ENCODE measurements at regions of chrX and their contacts with region 1.

Region 1: GRCh38 chrX:39477762-39478120 is 620.0 kb downstream of the BCOR start:
- DNase-seq: peak; percentile 66 to 86 (median 73)
- ATAC-seq: peak; percentile 69 to 88 (median 78)
- H3K4me3 ChIP-seq: no peak overlapping the region
- H3K27ac ChIP-seq: peak overlapping the region in 8 of 12 donors; percentile 39 to 69 (median 54)
- H3K4me1 ChIP-seq: peaks cover 0 to 26% (median 8%) of the 10 kb centered on the region in 12 donors
- H3K27me3 ChIP-seq: peaks cover 0 to 17% (median 0%) of the 10 kb centered on the region in 9 donors
- CTCF ChIP-seq: no peak
- POLR2A ChIP-seq: no peak

Region 2: GRCh38 chrX:39519030-39519488 is 41.3 kb after region 1 on chrX:
- intact Hi-C with region 1: loop called in 4 of 10 experiments (anchors 2 to 5 kb)
- DNase-seq: peak in 4 of 5 donors; percentile 29 to 49 (median 39)
- ATAC-seq: peak; percentile 10 to 63 (median 36)
- H3K4me3 ChIP-seq: peak overlapping the region in 7 of 12 donors; percentile 5 to 42 (median 32)
- H3K27ac ChIP-seq: peak overlapping the region; percentile 40 to 90 (median 70)
- H3K4me1 ChIP-seq: peaks cover 0 to 14% (median 2%) of the 10 kb centered on the region in 12 donors
- H3K27me3 ChIP-seq: peaks cover 0 to 19% (median 0%) of the 10 kb centered on the region in 9 donors
- CTCF ChIP-seq: no peak
- POLR2A ChIP-seq: no peak

Region 3: GRCh38 chrX:39652336-39653131 is 174.8 kb after region 1 on chrX:
- intact Hi-C with region 1: no loop called
- DNase-seq: peak in 1 of 5 donors; percentile 22
- ATAC-seq: no peak
- H3K4me3 ChIP-seq: no peak overlapping the region
- H3K27ac ChIP-seq: no peak overlapping the region
- H3K4me1 ChIP-seq: no peaks in the 10 kb centered on the region
- H3K27me3 ChIP-seq: peaks cover 0 to 37% (median 0%) of the 10 kb centered on the region in 9 donors
- CTCF ChIP-seq: peak in 11 of 12 donors; percentile 23 to 56 (median 38)
- POLR2A ChIP-seq: no peak

Region 4: DNA sequence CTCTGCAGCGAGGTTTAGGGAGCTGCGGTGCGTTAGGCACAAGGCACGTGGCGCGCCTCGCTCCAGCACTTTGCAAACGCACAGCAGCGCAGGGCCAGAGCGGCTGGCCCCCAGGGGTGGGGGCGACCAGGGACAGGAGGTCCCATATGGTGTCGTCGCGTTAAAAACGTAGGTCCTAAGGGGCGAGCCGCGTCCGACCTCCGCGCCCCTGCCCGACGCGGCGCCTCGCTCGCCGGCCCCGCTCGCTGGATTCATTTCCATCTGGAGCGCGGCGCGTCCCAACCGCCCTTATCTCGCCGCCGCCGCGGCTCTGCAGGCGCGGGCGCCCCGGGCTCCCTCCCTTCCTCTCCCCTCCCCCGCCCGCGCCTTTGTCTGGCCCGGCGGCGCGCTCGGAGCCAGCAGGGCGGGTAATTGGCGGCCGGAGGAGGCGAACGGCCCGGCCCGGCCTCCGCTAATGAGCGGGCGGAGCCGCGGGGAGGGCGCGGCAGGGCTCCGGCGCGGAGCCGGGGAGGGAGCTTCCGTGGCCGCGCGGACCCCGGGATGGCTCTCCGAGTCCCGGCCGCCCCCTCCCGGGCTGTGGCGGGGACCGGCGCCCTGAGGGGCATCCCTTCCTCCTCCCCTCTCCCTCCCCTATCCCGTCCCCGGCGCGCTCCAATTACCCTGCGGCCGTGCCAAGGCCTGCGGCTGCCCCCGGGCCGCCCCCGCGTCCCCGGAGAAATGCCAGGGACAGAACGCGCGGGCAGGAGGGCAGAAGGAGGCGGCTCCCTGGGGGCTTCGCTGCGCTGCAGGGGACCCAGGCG is 211.0 kb after region 1 on chrX:
- intact Hi-C with region 1: loop called in 1 of 10 experiments (anchors 5 kb)
- DNase-seq: peak; percentile 73 to 80 (median 79)
- ATAC-seq: peak; percentile 60 to 95 (median 92)
- H3K4me3 ChIP-seq: peak overlapping the region in 11 of 12 donors; percentile 30 to 61 (median 51)
- H3K27ac ChIP-seq: peak overlapping the region in 11 of 12 donors; percentile 6 to 79 (median 61)
- H3K4me1 ChIP-seq: peaks cover 0 to 26% (median 9%) of the 10 kb centered on the region in 12 donors
- H3K27me3 ChIP-seq: peaks cover 0 to 60% (median 0%) of the 10 kb centered on the region in 9 donors
- CTCF ChIP-seq: peak in 2 of 12 donors; percentile 9 to 11
- POLR2A ChIP-seq: no peak